ENCODE measurements at regions of chr9 and their contacts with region 1.

Region 1: DNA sequence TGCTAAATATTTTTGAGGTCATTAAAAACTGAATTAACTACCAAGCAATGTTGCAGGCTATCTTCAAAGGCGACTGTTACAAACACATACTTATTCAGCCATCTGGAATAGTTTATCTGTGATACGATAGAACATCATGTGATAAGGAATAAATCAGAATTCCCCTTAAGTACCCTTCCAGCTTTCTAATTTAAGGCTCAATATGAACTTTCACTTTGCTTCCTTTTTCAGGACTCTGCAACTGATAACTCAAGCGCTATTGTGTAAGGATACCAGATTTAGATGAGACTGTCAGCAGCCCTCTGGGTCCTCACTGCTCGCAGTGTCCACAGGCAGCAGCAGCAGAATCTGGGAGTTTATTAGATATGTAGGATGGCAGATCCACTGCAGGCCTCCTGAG is 416.3 kb downstream of the SPATA31D1 start:
- DNase-seq: no peak
- ATAC-seq: no peak
- H3K4me3 ChIP-seq: no peak overlapping the region
- H3K4me1 ChIP-seq: no peaks in the 10 kb centered on the region
- CTCF ChIP-seq: no peak

Region 2: GRCh38 chr9:82271106-82271561 is 133.7 kb before region 1 on chr9:
- intact Hi-C with region 1: no loop called
- DNase-seq: no peak
- ATAC-seq: no peak
- H3K4me3 ChIP-seq: no peak overlapping the region
- H3K4me1 ChIP-seq: no peaks in the 10 kb centered on the region
- CTCF ChIP-seq: no peak

Region 3: GRCh38 chr9:82342046-82342445 is 62.8 kb before region 1 on chr9:
- intact Hi-C with region 1: loop called in 1 of 2 experiments (anchors 10 kb)
- DNase-seq: no peak
- ATAC-seq: no peak
- H3K4me3 ChIP-seq: no peak overlapping the region
- H3K4me1 ChIP-seq: no peaks in the 10 kb centered on the region
- CTCF ChIP-seq: no peak